ENCODE measurements at regions of chr11 and their contacts with region 1.

Region 1: GRCh38 chr11:61816736-61817455 is at the start of gene FADS1:
- DNase-seq: peak; percentile 95 to 97 (median 96)
- ATAC-seq: peak; percentile 67 to 68
- H3K4me3 ChIP-seq: peak within 1 kb of the TSS; percentile 32
- H3K27ac ChIP-seq: peak within 1 kb of the TSS; percentile 91
- H3K4me1 ChIP-seq: no peaks in the 10 kb centered on the region
- H3K27me3 ChIP-seq: no peaks in the 10 kb centered on the region
- total RNA-seq, gene FADS1: 41.3 to 45.7 (median 43.3) TPM

Region 2: GRCh38 chr11:61860054-61860903 is 43.4 kb after region 1 on chr11:
- intact Hi-C with region 1: loop called in 1 of 4 experiments (anchors 10 kb)
- DNase-seq: peak; percentile 76 to 91 (median 90)
- ATAC-seq: peak; percentile 67 to 73
- H3K4me3 ChIP-seq: no peak overlapping the region
- H3K27ac ChIP-seq: peak overlapping the region; percentile 54
- H3K4me1 ChIP-seq: peaks cover 6% of the 10 kb centered on the region
- H3K27me3 ChIP-seq: no peaks in the 10 kb centered on the region

Region 3: DNA sequence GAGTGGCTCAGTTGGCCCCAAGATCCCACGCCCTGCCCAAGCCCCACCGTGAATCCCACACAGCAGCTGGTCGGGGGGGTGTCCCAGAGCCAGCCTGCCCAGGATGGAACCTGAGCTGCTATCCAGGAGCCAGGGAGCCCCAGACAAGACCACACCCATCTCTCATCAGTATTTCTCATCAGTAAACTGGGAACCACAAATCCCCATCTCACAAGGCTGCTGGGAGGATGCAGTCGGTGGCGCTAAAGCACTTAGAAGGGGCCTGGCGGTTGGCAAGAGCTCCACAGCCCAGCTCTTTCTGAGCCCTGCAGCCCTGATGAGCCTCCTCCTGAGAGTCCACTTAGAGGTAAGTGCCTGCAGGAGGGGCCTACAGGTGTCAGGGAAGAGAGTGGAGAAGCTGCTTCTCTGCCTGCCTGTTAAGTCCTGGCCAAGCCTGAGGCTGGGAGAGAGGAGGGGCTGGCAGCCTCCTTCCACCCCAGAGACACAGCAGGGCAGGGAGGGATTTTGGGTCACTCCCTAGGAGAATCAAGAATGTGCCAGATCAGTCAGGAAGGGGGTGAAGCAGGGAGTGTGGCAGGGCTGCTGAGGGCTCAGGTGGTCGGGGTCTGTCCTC is 68.4 kb after region 1 on chr11:
- intact Hi-C with region 1: no loop called
- DNase-seq: no peak
- ATAC-seq: no peak
- H3K4me3 ChIP-seq: no peak overlapping the region
- H3K27ac ChIP-seq: no peak overlapping the region
- H3K4me1 ChIP-seq: peaks cover 12% of the 10 kb centered on the region
- H3K27me3 ChIP-seq: no peaks in the 10 kb centered on the region

Measured in right cardiac atrium (tissue), 5 donors.